HCT116 (cell line): ENCODE measurements at regions of chrX and their contacts with region 1.

Region 1: GRCh38 chrX:102950908-102951866 is 14.1 kb downstream of the RAB40AL start:
- DNase-seq: peak; percentile 23
- ATAC-seq: peak; percentile 87
- H3K4me3 ChIP-seq: no peak overlapping the region
- H3K27ac ChIP-seq: no peak overlapping the region
- H3K4me1 ChIP-seq: peaks cover 0 to 4% of the 10 kb centered on the region in 2 experiments; a peak in 2 of 4 replicates
- H3K27me3 ChIP-seq: no peaks in the 10 kb centered on the region
- CTCF ChIP-seq: peak; percentile 52 to 66 (median 63); a peak in 5 of 6 replicates
- POLR2A ChIP-seq: no peak
- RAD21 ChIP-seq: peak; percentile 38; the same call in 1 of the 2 replicates

Region 2: GRCh38 chrX:102899940-102900916 is 51.0 kb before region 1 on chrX:
- CTCF ChIA-PET with region 1: interaction called, 10 read pairs
- POLR2A ChIA-PET with region 1: no interaction called
- RAD21 ChIA-PET with region 1: no interaction called
- intact Hi-C with region 1: no loop called
- DNase-seq: peak; percentile 27
- ATAC-seq: peak; percentile 84
- H3K4me3 ChIP-seq: no peak overlapping the region
- H3K27ac ChIP-seq: no peak overlapping the region
- H3K4me1 ChIP-seq: no peaks in the 10 kb centered on the region
- H3K27me3 ChIP-seq: no peaks in the 10 kb centered on the region
- CTCF ChIP-seq: peak; percentile 41 to 62 (median 58); a peak in 5 of 6 replicates
- POLR2A ChIP-seq: no peak
- RAD21 ChIP-seq: peak; percentile 49

Region 3: GRCh38 chrX:103157496-103158320 is 206.5 kb after region 1 on chrX:
- CTCF ChIA-PET with region 1: interaction called, 10 read pairs
- POLR2A ChIA-PET with region 1: no interaction called
- RAD21 ChIA-PET with region 1: no interaction called
- intact Hi-C with region 1: loop called (anchors 5 kb)
- DNase-seq: no peak
- ATAC-seq: peak; percentile 42; the same call in 1 of the 2 replicates
- H3K4me3 ChIP-seq: no peak overlapping the region
- H3K27ac ChIP-seq: no peak overlapping the region
- H3K4me1 ChIP-seq: peaks cover 2 to 8% of the 10 kb centered on the region in 2 experiments; a peak in 3 of 4 replicates
- H3K27me3 ChIP-seq: no peaks in the 10 kb centered on the region
- CTCF ChIP-seq: peak; percentile 51 to 68 (median 58); a peak in 5 of 6 replicates
- POLR2A ChIP-seq: no peak
- RAD21 ChIP-seq: peak; percentile 64

Region 4: DNA sequence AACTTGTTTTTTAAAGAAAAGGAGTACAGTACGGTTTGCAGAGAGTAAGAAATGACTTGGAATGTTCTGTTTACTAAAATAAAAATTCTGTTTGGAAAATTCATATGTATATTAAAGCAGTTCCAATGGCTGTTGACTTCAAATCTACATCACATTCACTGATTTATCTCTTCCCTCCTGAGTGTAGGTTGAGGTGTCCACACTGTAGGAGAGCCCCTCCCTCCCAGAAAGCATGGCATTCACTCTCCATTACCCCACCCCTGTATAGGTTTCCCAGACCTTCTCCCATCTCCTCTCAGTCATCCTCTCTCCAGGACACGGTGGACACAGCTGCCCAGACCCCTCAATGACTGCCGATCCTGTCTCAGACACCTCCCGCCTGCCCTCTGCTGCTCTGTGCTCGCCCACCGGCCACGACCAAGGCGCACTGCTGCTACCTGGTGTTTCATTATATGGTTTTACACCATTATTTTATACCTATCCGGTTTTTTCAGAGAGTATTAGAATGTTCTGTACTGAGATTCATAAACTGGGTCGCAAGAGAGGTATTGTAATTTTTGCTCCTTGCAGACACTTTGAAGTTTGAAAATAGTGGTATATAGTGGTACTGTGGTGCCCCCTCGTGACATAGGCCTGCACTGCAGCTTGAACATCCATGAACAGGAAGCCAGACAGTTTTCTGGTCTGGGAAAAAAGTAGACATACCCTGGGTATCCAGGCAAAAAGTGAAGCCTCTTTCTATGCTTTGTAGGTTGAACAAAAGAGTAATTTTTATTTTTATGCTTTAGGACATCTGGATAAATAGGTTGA is 225.0 kb after region 1 on chrX:
- CTCF ChIA-PET with region 1: interaction called, 19 read pairs
- POLR2A ChIA-PET with region 1: no interaction called
- RAD21 ChIA-PET with region 1: interaction called in 1 of 2 experiments, 3 read pairs
- intact Hi-C with region 1: loop called (anchors 1 kb)
- DNase-seq: no peak
- ATAC-seq: peak; percentile 89
- H3K4me3 ChIP-seq: peak overlapping the region; percentile 28 to 51
- H3K27ac ChIP-seq: no peak overlapping the region
- H3K4me1 ChIP-seq: peaks cover 0 to 3% of the 10 kb centered on the region in 2 experiments; a peak in 1 of 4 replicates
- H3K27me3 ChIP-seq: no peaks in the 10 kb centered on the region
- CTCF ChIP-seq: peak; percentile 72 to 75 (median 75); a peak in 5 of 6 replicates
- POLR2A ChIP-seq: no peak
- RAD21 ChIP-seq: peak; percentile 71

Region 5: DNA sequence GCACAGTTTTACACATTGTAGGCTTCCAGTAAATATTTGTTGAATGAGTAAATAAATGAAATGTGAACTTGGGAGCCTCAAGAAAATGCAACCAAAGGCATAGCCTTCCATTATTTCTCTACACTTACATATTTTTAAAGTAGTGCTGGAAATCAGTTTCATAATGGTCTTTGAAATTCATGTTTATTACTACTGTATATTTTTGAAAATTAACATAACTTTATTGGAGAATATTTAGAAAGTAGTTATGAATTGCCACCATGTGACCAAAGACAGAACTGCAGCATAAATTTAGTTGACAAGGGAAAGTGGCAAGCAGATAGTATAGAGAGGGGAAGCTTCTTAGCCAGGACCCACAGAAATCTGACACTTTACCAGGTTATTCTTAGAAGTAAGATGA is 297.4 kb after region 1 on chrX:
- CTCF ChIA-PET with region 1: no interaction called
- POLR2A ChIA-PET with region 1: no interaction called
- RAD21 ChIA-PET with region 1: no interaction called
- intact Hi-C with region 1: loop called (anchors 5 kb)
- DNase-seq: peak; percentile 8
- ATAC-seq: peak; percentile 58; the same call in 1 of the 2 replicates
- H3K4me3 ChIP-seq: no peak overlapping the region
- H3K27ac ChIP-seq: no peak overlapping the region
- H3K4me1 ChIP-seq: peaks cover 3 to 5% of the 10 kb centered on the region in 2 experiments; a peak in 1 of 4 replicates
- H3K27me3 ChIP-seq: no peaks in the 10 kb centered on the region
- CTCF ChIP-seq: peak in 2 of 3 experiments; percentile 27 to 40; a peak in 2 of 6 replicates
- POLR2A ChIP-seq: no peak
- RAD21 ChIP-seq: peak; percentile 48

Region 6: DNA sequence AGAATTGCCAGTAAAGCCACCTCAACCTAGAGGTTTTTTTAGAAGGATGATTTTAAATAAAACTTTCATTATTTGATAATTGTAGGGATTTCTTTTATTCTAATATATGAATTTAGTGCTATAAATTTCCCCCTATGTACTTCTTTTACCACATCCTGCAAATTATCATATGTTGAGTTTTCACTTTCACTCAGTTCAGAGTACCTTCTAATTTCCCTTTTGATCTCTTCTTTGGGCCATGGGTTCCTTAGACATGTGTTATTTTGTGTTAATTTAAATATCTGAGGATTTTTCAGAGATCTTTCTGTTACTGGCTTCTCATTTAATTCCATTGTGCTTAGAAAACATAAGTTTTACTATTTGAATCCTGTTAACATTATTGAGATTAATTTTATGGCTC is 353.5 kb after region 1 on chrX:
- CTCF ChIA-PET with region 1: no interaction called
- POLR2A ChIA-PET with region 1: no interaction called
- RAD21 ChIA-PET with region 1: no interaction called
- intact Hi-C with region 1: no loop called
- DNase-seq: no peak
- ATAC-seq: no peak
- H3K4me3 ChIP-seq: no peak overlapping the region
- H3K27ac ChIP-seq: no peak overlapping the region
- H3K4me1 ChIP-seq: no peaks in the 10 kb centered on the region
- H3K27me3 ChIP-seq: no peaks in the 10 kb centered on the region
- CTCF ChIP-seq: no peak
- POLR2A ChIP-seq: no peak
- RAD21 ChIP-seq: no peak

Region 7: GRCh38 chrX:103607364-103608305 is 656.4 kb after region 1 on chrX and contains the start of gene TCEAL3:
- CTCF ChIA-PET with region 1: no interaction called
- POLR2A ChIA-PET with region 1: no interaction called
- RAD21 ChIA-PET with region 1: no interaction called
- intact Hi-C with region 1: no loop called
- DNase-seq: no peak
- ATAC-seq: no peak
- H3K4me3 ChIP-seq: no peak within 1 kb of the TSS
- H3K27ac ChIP-seq: no peak within 1 kb of the TSS
- H3K4me1 ChIP-seq: no peaks in the 10 kb centered on the region
- H3K27me3 ChIP-seq: no peaks in the 10 kb centered on the region
- CTCF ChIP-seq: no peak
- POLR2A ChIP-seq: no peak
- RAD21 ChIP-seq: no peak
- total RNA-seq, gene TCEAL3: not detected